Activated B cell treated with CpG ODN at 0.5 μM for 24 hours (primary cell): ENCODE measurements at regions of chr1 and their contacts with region 1.

Region 1: GRCh38 chr1:206575165-206575893 is 36.9 kb downstream of the EIF2D start:
- DNase-seq: no peak
- ATAC-seq: peak; percentile 19
- H3K4me3 Mint-ChIP-seq: peak overlapping the region; percentile 73
- H3K27ac Mint-ChIP-seq: peak overlapping the region; percentile 96
- H3K4me1 Mint-ChIP-seq: peaks cover 98% of the 10 kb centered on the region
- H3K27me3 Mint-ChIP-seq: no peaks in the 10 kb centered on the region
- CTCF ChIP-seq: no peak

Region 2: GRCh38 chr1:206556750-206557635 is 18.3 kb before region 1 on chr1:
- CTCF ChIA-PET with region 1: interaction called, 132 read pairs
- POLR2A ChIA-PET with region 1: interaction called, 343 read pairs
- intact Hi-C with region 1: loop called (anchors 1 kb)
- DNase-seq: peak; percentile 83
- ATAC-seq: peak; percentile 78
- H3K4me3 Mint-ChIP-seq: peak overlapping the region; percentile 96
- H3K27ac Mint-ChIP-seq: peak overlapping the region; percentile 96
- H3K4me1 Mint-ChIP-seq: peaks cover 71% of the 10 kb centered on the region
- H3K27me3 Mint-ChIP-seq: no peaks in the 10 kb centered on the region
- CTCF ChIP-seq: no peak

Region 3: GRCh38 chr1:206563367-206564207 is 11.7 kb before region 1 on chr1:
- CTCF ChIA-PET with region 1: interaction called, 132 read pairs
- POLR2A ChIA-PET with region 1: interaction called, 343 read pairs
- intact Hi-C with region 1: loop called (anchors 1 kb)
- DNase-seq: no peak
- ATAC-seq: peak; percentile 3
- H3K4me3 Mint-ChIP-seq: peak overlapping the region; percentile 63
- H3K27ac Mint-ChIP-seq: peak overlapping the region; percentile 73
- H3K4me1 Mint-ChIP-seq: peaks cover 98% of the 10 kb centered on the region
- H3K27me3 Mint-ChIP-seq: no peaks in the 10 kb centered on the region
- CTCF ChIP-seq: no peak

Region 4: DNA sequence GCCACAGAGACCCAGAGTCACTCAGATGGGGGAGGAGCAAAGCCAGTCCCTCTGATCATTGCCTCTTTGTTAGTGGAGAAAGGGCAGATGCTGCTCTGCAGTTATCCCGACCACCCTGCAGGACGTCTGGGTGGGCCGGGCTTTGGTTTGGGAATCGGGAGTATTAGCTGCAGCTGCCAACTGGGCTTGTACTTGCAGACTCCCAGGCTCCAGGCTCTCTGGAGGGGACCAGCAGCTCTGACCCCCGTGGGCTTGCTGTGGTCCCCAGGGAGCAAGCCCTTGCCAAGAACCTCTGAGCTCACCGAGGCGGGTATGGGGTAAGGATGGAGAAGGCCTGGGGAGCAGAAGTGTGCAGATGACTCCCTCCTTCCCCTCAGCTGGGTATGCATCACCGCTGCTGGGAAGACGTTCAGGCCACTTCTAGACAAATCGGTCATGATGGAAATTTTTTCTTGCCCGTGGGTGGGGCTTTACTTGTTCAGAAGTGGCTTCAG is 131.0 kb after region 1 on chr1:
- CTCF ChIA-PET with region 1: no interaction called
- POLR2A ChIA-PET with region 1: no interaction called
- intact Hi-C with region 1: no loop called
- DNase-seq: no peak
- ATAC-seq: peak; percentile 14
- H3K4me3 Mint-ChIP-seq: peak overlapping the region; percentile 18
- H3K27ac Mint-ChIP-seq: peak overlapping the region; percentile 33
- H3K4me1 Mint-ChIP-seq: peaks cover 91% of the 10 kb centered on the region
- H3K27me3 Mint-ChIP-seq: no peaks in the 10 kb centered on the region
- CTCF ChIP-seq: no peak

Region 5: DNA sequence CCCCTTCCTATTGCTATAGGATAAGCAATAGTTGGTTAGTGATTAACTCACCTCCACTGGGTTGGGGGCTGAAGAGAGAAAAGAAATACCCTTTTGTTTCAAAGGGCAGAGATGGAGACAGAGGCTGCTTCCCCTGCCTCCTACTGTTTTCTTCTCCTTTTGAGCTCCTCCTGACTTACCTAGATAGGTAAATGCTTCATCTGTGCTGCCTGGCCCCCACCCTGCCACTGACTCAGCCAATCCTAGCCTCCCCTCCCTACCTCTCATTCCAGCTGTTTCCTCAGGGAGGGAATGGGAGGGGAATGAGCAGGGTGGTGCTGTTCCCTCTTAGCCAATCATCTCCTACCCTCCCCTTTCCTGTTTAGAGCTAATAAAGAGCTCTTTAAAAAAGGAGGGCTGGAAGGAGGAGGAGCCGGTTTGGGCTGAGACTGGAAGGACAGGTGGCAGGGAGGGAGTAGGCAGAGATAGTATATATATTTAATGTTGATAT is 457.2 kb after region 1 on chr1 and contains the start of gene C1orf116:
- CTCF ChIA-PET with region 1: no interaction called
- POLR2A ChIA-PET with region 1: no interaction called
- intact Hi-C with region 1: no loop called
- DNase-seq: no peak
- ATAC-seq: no peak
- H3K4me3 Mint-ChIP-seq: no peak within 1 kb of the TSS
- H3K27ac Mint-ChIP-seq: no peak within 1 kb of the TSS
- H3K4me1 Mint-ChIP-seq: no peaks in the 10 kb centered on the region
- H3K27me3 Mint-ChIP-seq: peaks cover 37% of the 10 kb centered on the region
- CTCF ChIP-seq: no peak
- total RNA-seq, gene C1orf116: 0.09 TPM in 1 of 2 replicates, not detected in the other